Activated CD4-positive, alpha-beta memory T cell treated with anti-CD3 and anti-CD28 coated beads, Interleukin-2, amount 10 ng/mL, durations not matched to agents 7 days and 5 days (primary cell): ENCODE measurements at regions of chr4 and their contacts with region 1.

Region 1: DNA sequence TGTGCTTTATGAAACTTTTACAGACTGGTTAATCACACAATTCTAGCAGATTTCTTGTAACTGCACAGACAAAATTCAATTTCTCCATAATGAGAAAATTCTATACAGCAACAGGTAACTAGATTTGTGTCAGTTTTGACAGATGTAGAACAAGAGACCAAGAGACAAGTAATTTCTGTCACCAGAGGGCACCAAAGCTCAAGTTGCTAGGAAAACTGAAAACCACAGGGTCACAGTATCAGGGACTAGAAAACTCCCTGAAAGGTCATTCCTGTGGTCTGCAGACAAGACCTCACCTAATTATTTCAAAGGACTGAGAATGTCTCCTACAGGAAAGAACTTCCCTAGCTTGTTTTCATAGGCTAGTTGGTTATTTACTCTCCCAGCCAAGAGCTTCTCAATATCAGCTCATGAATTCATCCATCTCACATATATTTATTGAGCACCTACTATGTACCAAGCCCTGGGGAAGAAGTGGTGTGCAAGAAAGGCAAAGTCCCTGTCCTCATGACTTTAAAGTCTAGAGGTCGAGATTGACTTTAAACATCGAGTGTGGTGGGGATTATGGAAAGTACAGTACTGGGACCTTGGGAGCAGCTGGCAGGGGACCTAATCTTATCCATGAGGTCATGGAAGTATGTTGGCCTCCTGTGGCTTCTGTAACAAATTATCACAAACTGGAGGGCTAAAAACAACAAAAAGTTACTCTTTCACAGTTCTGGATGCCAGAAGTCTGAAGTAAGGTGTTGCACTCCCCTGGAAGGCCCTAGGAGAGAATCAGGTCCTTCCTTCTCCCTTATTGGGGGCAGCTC is 47.8 kb upstream of the SETD7 start:
- DNase-seq: peak; percentile 41
- H3K4me3 Mint-ChIP-seq: no peak overlapping the region
- H3K27ac Mint-ChIP-seq: no peak overlapping the region
- H3K4me1 Mint-ChIP-seq: peaks cover 27% of the 10 kb centered on the region
- H3K27me3 Mint-ChIP-seq: peaks cover 24% of the 10 kb centered on the region

Region 2: DNA sequence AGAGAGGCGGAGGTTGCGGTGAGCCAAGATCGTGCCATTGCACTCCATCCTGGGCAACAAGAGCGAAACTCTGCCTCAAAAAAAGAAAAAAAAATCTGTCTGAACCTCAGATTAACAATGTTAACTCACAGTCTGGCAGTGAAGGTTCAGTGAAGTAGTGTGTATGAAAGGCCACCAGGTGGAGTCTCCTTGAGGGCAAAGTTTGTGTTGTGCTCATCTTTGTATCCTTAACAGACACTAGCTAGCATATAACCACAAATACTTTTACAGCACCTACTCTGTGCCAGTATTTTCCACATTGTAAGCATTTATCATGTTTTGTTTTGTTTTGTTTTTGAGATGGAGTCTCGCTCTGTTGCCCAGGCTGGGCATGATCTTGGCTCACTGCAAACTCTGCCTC is 15.9 kb after region 1 on chr4:
- CTCF ChIA-PET with region 1: interaction called, 24 read pairs
- POLR2A ChIA-PET with region 1: no interaction called
- DNase-seq: no peak
- H3K4me3 Mint-ChIP-seq: no peak overlapping the region
- H3K27ac Mint-ChIP-seq: no peak overlapping the region
- H3K4me1 Mint-ChIP-seq: no peaks in the 10 kb centered on the region
- H3K27me3 Mint-ChIP-seq: peaks cover 6% of the 10 kb centered on the region

Region 3: GRCh38 chr4:139651282-139652194 is 47.8 kb after region 1 on chr4:
- CTCF ChIA-PET with region 1: interaction called, 90 read pairs
- POLR2A ChIA-PET with region 1: no interaction called
- DNase-seq: peak; percentile 77
- H3K4me3 Mint-ChIP-seq: no peak overlapping the region
- H3K27ac Mint-ChIP-seq: no peak overlapping the region
- H3K4me1 Mint-ChIP-seq: peaks cover 9% of the 10 kb centered on the region
- H3K27me3 Mint-ChIP-seq: peaks cover 4% of the 10 kb centered on the region

Region 4: DNA sequence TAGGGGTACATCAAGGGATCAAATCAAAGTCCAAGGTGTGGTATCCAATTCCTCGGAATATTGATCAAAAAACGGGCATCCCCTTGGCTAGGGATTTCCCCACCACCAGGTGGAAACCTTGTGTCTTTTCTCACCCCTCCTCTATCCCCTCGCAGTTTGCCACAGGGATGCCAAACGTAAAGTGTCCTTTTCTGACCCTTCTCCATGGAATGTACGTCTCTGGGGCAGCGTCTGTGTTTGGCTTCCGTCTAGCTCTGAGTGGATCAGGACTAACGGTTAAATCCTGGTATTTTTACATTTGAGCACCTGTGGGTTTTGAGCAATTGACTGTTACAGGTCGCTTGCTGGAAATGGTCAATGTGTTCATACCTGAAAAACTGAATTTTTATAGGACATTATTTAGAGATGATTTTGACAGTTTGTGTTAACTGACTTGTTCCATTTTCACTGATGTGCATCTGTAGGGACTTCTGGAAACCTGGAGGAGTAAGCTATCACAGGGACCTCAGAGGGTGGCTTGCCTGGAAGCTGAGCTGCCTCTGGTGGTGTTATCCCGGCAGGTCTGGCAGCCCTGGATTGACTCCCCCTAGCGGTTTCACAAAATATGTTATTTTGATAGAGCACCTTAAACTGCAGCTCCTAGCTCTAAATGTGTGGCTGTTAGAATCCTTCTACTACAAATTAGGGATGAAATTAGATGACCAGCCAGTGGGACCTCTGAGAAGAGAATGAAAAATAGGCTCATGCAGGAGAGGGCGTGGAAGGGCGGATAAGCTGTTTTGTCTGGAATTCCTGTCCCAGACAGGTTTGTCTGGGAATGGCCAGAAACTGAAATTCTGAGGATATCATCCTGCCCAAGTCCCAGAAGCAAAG is 53.1 kb after region 1 on chr4:
- CTCF ChIA-PET with region 1: interaction called, 90 read pairs
- POLR2A ChIA-PET with region 1: interaction called, 4 read pairs
- DNase-seq: peak; percentile 61
- H3K4me3 Mint-ChIP-seq: peak overlapping the region; percentile 53
- H3K27ac Mint-ChIP-seq: peak overlapping the region; percentile 97
- H3K4me1 Mint-ChIP-seq: peaks cover 40% of the 10 kb centered on the region
- H3K27me3 Mint-ChIP-seq: peaks cover 4% of the 10 kb centered on the region